IMR-90 (cell line): ENCODE measurements at regions of chr9 and their contacts with region 1.

Region 1: GRCh38 chr9:23811633-23812032 is 14.4 kb downstream of the ELAVL2 start:
- DNase-seq: no peak
- ATAC-seq: no peak
- H3K4me3 ChIP-seq: no peak overlapping the region
- H3K27ac ChIP-seq: no peak overlapping the region
- H3K4me1 ChIP-seq: no peaks in the 10 kb centered on the region
- H3K27me3 ChIP-seq: no peaks in the 10 kb centered on the region
- CTCF ChIP-seq: no peak
- POLR2A ChIP-seq: no peak
- RAD21 ChIP-seq: no peak

Region 2: GRCh38 chr9:23581931-23582330 is 229.7 kb before region 1 on chr9:
- CTCF ChIA-PET with region 1: no interaction called
- POLR2A ChIA-PET with region 1: no interaction called
- dilution Hi-C with region 1: no loop called
- in situ Hi-C with region 1: no loop called
- intact Hi-C with region 1: no loop called
- DNase-seq: no peak
- ATAC-seq: no peak
- H3K4me3 ChIP-seq: no peak overlapping the region
- H3K27ac ChIP-seq: no peak overlapping the region
- H3K4me1 ChIP-seq: no peaks in the 10 kb centered on the region
- H3K27me3 ChIP-seq: no peaks in the 10 kb centered on the region
- CTCF ChIP-seq: no peak
- POLR2A ChIP-seq: no peak
- RAD21 ChIP-seq: no peak

Region 3: GRCh38 chr9:23798325-23798724 is 13.3 kb before region 1 on chr9:
- CTCF ChIA-PET with region 1: no interaction called
- POLR2A ChIA-PET with region 1: no interaction called
- dilution Hi-C with region 1: no loop called
- in situ Hi-C with region 1: no loop called
- intact Hi-C with region 1: loop called (anchors 1 kb)
- DNase-seq: no peak
- ATAC-seq: no peak
- H3K4me3 ChIP-seq: no peak overlapping the region
- H3K27ac ChIP-seq: no peak overlapping the region
- H3K4me1 ChIP-seq: no peaks in the 10 kb centered on the region
- H3K27me3 ChIP-seq: no peaks in the 10 kb centered on the region
- CTCF ChIP-seq: no peak
- POLR2A ChIP-seq: no peak
- RAD21 ChIP-seq: no peak